ENCODE measurements at regions of chr1 and their contacts with region 1.

Region 1: GRCh38 chr1:160006312-160006940 is 25.4 kb downstream of the PIGM start:
- DNase-seq: peak; percentile 87
- ATAC-seq: peak; percentile 94
- H3K4me3 Mint-ChIP-seq: no peak overlapping the region
- H3K27ac Mint-ChIP-seq: no peak overlapping the region
- H3K4me1 Mint-ChIP-seq: no peaks in the 10 kb centered on the region
- H3K27me3 Mint-ChIP-seq: peaks cover 2% of the 10 kb centered on the region
- CTCF ChIP-seq: peak; percentile 85

Region 2: DNA sequence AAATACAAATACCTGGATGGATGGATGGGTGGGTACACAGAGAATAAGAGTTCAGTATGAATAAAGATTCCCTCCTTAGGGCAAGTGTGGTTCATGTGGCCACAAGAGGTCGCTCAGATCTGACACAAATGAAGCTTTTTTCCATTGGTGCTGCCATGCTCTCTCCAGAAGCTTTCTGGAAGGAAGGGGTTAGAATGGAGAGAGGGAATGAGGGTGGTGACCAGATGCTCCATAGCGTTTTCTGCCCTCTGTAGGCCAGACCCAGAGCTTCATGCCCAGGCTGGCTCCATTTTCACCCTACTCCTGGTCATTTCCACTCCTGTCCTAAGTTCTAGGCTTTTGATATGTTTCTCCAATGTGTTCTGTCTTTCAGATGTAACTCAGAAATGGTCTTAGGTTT is 207.5 kb before region 1 on chr1:
- CTCF ChIA-PET with region 1: interaction called, 28 read pairs
- POLR2A ChIA-PET with region 1: no interaction called
- intact Hi-C with region 1: loop called (anchors 5 kb)
- DNase-seq: peak; percentile 70
- ATAC-seq: peak; percentile 52
- H3K4me3 Mint-ChIP-seq: no peak overlapping the region
- H3K27ac Mint-ChIP-seq: no peak overlapping the region
- H3K4me1 Mint-ChIP-seq: peaks cover 37% of the 10 kb centered on the region
- H3K27me3 Mint-ChIP-seq: peaks cover 1% of the 10 kb centered on the region
- CTCF ChIP-seq: peak; percentile 77

Region 3: DNA sequence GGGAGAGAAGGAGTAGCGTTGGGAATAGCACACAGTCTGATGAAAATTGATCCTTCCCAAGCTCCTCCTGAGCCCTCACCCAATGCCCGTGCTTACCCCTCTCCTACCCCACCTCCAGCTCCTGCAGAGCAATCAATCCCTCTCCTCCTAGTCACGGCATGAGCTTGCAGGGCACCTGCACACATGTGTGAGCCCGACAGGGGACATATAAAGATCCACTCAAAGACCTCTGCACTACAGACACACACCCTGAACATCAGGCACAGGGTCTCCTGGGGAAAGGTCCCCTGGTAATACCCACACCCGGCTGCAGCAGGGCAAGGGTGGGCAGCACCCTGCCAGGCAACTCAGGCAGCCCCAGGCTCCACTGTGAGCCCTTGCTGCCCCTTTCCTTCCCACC is 144.4 kb before region 1 on chr1:
- CTCF ChIA-PET with region 1: no interaction called
- POLR2A ChIA-PET with region 1: no interaction called
- intact Hi-C with region 1: no loop called
- DNase-seq: no peak
- ATAC-seq: no peak
- H3K4me3 Mint-ChIP-seq: no peak overlapping the region
- H3K27ac Mint-ChIP-seq: no peak overlapping the region
- H3K4me1 Mint-ChIP-seq: peaks cover 9% of the 10 kb centered on the region
- H3K27me3 Mint-ChIP-seq: no peaks in the 10 kb centered on the region
- CTCF ChIP-seq: no peak

Region 4: GRCh38 chr1:159900086-159900680 is 106.2 kb before region 1 on chr1 and contains the start of gene CFAP45:
- CTCF ChIA-PET with region 1: interaction called, 123 read pairs
- POLR2A ChIA-PET with region 1: no interaction called
- intact Hi-C with region 1: no loop called
- DNase-seq: peak; percentile 29
- ATAC-seq: peak; percentile 51
- H3K4me3 Mint-ChIP-seq: no peak within 1 kb of the TSS
- H3K27ac Mint-ChIP-seq: no peak within 1 kb of the TSS
- H3K4me1 Mint-ChIP-seq: no peaks in the 10 kb centered on the region
- H3K27me3 Mint-ChIP-seq: no peaks in the 10 kb centered on the region
- CTCF ChIP-seq: no peak
- total RNA-seq, gene CFAP45: 1.3 to 1.4 TPM

Region 5: GRCh38 chr1:159924981-159925712 is 81.3 kb before region 1 on chr1 and contains the start of gene TAGLN2:
- CTCF ChIA-PET with region 1: interaction called, 374 read pairs
- POLR2A ChIA-PET with region 1: no interaction called
- intact Hi-C with region 1: no loop called
- DNase-seq: peak; percentile 94
- ATAC-seq: peak; percentile 74
- H3K4me3 Mint-ChIP-seq: peak within 1 kb of the TSS; percentile 92
- H3K27ac Mint-ChIP-seq: peak within 1 kb of the TSS; percentile 98
- H3K4me1 Mint-ChIP-seq: peaks cover 50% of the 10 kb centered on the region
- H3K27me3 Mint-ChIP-seq: no peaks in the 10 kb centered on the region
- CTCF ChIP-seq: no peak
- total RNA-seq, gene TAGLN2: 475 to 482 TPM

Region 6: GRCh38 chr1:159953536-159954515 is 52.6 kb before region 1 on chr1 and contains the start of gene SLAMF9:
- CTCF ChIA-PET with region 1: interaction called, 70 read pairs
- POLR2A ChIA-PET with region 1: no interaction called
- intact Hi-C with region 1: no loop called
- DNase-seq: no peak
- ATAC-seq: no peak
- H3K4me3 Mint-ChIP-seq: no peak within 1 kb of the TSS
- H3K27ac Mint-ChIP-seq: no peak within 1 kb of the TSS
- H3K4me1 Mint-ChIP-seq: peaks cover 2% of the 10 kb centered on the region
- H3K27me3 Mint-ChIP-seq: peaks cover 10% of the 10 kb centered on the region
- CTCF ChIP-seq: no peak
- total RNA-seq, gene SLAMF9: not detected

Region 7: GRCh38 chr1:160018900-160019299 is 12.5 kb after region 1 on chr1:
- CTCF ChIA-PET with region 1: interaction called, 142 read pairs
- POLR2A ChIA-PET with region 1: no interaction called
- intact Hi-C with region 1: no loop called
- DNase-seq: peak; percentile 15
- ATAC-seq: peak; percentile 47
- H3K4me3 Mint-ChIP-seq: no peak overlapping the region
- H3K27ac Mint-ChIP-seq: no peak overlapping the region
- H3K4me1 Mint-ChIP-seq: peaks cover 4% of the 10 kb centered on the region
- H3K27me3 Mint-ChIP-seq: peaks cover 6% of the 10 kb centered on the region
- CTCF ChIP-seq: no peak

Region 8: DNA sequence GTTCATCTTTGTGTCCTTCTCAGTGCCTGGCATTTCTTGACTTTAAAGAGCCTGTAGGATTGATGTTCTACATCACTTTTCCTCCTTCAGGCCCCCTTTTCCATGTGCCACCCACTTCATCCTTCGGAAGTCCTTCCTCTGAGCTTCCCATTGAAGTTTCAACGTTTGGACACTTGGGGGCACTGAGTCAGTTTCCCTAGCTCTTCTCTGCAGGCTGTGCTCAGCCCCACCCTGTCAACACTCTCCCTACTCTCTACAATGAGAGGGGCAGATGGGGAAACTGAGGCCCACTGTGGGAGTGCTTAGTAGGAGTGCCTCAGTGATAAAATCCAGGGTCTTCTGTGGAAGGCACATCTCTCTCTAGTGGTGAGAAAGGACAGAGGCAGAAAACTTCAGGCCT is 51.7 kb after region 1 on chr1:
- CTCF ChIA-PET with region 1: interaction called, 14 read pairs
- POLR2A ChIA-PET with region 1: no interaction called
- intact Hi-C with region 1: no loop called
- DNase-seq: no peak
- ATAC-seq: no peak
- H3K4me3 Mint-ChIP-seq: no peak overlapping the region
- H3K27ac Mint-ChIP-seq: no peak overlapping the region
- H3K4me1 Mint-ChIP-seq: no peaks in the 10 kb centered on the region
- H3K27me3 Mint-ChIP-seq: peaks cover 15% of the 10 kb centered on the region
- CTCF ChIP-seq: no peak

Measured in activated CD8-positive, alpha-beta T cell treated with anti-CD3 and anti-CD28 coated beads for 36 hours (primary cell).